ENCODE measurements at regions of chr10 and their contacts with region 1.

Region 1: GRCh38 chr10:68371604-68372003 is 35.5 kb downstream of the RUFY2 start:
- DNase-seq: no peak
- ATAC-seq: no peak
- H3K4me3 ChIP-seq: no peak overlapping the region
- H3K27ac ChIP-seq: no peak overlapping the region
- H3K4me1 ChIP-seq: no peaks in the 10 kb centered on the region
- H3K27me3 ChIP-seq: no peaks in the 10 kb centered on the region
- CTCF ChIP-seq: no peak
- EP300 ChIP-seq: no peak
- POLR2A ChIP-seq: no peak
- RAD21 ChIP-seq: no peak

Region 2: DNA sequence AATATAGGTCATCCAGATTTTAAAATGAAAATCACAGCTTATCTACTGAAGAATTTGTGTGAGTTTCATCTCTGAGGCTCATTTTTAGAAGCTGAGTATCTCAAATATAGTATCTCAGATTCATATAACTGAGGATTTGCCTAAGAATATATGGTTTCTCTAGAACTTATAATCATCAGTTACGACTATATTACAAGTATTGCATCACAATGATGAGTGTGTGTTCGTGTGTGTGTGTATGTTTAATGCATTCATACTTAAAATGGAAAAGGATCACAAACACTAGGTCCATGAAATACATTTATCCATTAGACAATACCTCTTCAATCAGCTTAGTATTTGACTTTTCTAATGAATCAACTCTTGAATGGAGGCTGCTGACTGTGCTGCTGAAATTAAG is 14.1 kb after region 1 on chr10:
- CTCF ChIA-PET with region 1: no interaction called
- POLR2A ChIA-PET with region 1: interaction called, 11 read pairs
- in situ Hi-C with region 1: no loop called
- intact Hi-C with region 1: no loop called
- DNase-seq: no peak
- ATAC-seq: no peak
- H3K4me3 ChIP-seq: no peak overlapping the region
- H3K27ac ChIP-seq: no peak overlapping the region
- H3K4me1 ChIP-seq: no peaks in the 10 kb centered on the region
- H3K27me3 ChIP-seq: no peaks in the 10 kb centered on the region
- CTCF ChIP-seq: no peak
- EP300 ChIP-seq: no peak
- POLR2A ChIP-seq: no peak
- RAD21 ChIP-seq: no peak

Measured in K562 (cell line).